Heart left ventricle (tissue), 16 donors: ENCODE measurements at regions of chr20 and their contacts with region 1.

Region 1: DNA sequence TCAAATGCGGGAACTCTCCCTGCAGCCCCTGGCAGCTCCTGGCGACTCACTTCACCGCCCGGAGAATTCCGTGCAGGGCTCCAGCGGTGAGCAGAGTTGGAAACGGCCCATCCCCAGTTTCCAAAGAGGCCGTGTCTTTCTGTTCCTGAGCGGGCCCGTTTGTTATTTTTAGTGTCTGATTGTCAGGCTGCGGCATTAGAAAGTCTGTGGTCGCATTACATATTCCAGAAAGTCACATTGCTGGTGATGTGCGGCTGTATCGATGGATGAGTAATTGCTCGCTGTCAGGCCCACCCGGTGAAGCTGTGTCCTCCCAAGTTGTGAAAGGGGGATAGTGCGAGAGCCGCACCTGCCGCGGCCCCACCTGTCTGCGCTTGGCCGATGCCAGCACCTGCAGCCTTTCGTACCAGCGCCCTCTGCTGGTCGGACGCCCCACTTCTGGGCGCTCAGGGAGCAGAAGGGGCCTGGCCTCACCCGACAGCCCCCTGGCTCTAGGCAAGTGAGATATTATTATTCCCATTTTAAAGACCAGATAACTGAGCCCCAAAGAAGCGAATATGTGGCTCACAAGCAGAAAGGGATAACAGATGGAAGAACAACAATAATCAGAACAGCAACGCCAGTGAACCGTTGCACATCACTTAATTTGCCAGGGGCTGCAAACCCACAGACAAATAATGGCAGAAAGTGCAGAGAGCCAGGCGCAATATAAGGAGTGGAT is 244.9 kb downstream of the TSHZ2 start:
- DNase-seq: peak; percentile 46 to 84 (median 64)
- ATAC-seq: peak in 3 of 4 donors; percentile 81 to 84 (median 82)
- H3K4me3 ChIP-seq: peak overlapping the region in 9 of 12 donors; percentile 5 to 32 (median 24)
- H3K27ac ChIP-seq: no peak overlapping the region
- H3K4me1 ChIP-seq: peaks cover 0 to 8% (median 5%) of the 10 kb centered on the region in 12 donors
- H3K27me3 ChIP-seq: peaks cover 0 to 10% (median 0%) of the 10 kb centered on the region in 9 donors
- CTCF ChIP-seq: peak; percentile 80 to 94 (median 88)
- POLR2A ChIP-seq: no peak

Region 2: DNA sequence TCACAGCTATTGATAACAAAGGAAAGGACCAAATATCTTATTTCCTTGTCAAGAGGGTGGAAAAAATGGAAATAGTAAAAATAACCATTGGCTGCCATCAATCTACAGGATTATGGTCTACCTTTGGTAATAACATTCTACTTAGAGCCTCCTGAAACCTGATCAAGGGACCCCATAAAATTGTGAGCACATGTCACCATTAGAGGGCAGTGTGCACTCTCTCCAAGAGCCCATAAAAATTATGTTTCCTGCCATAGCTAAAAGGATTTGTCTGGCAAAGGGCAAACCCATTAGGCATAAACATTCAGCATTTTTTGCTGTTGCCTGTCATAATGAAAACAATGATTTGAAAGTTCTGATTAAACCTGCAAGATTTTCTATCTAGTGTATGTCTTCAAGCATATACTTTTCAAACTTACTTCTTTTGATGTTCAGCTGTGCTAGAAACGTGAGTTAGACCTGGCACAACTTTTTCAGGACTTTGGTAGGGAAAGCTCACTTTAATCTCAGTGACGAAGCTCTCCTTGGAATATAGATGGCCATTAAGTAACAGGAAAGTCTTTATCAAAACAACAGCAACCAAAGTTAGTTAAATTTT is 904.8 kb before region 1 on chr20:
- intact Hi-C with region 1: loop called in 5 of 10 experiments (anchors 2 to 10 kb)
- DNase-seq: peak in 2 of 5 donors; percentile 25 to 29
- ATAC-seq: peak in 3 of 4 donors; percentile 56 to 67 (median 64)
- H3K4me3 ChIP-seq: no peak overlapping the region
- H3K27ac ChIP-seq: no peak overlapping the region
- H3K4me1 ChIP-seq: peaks cover 0 to 9% (median 0%) of the 10 kb centered on the region in 12 donors
- H3K27me3 ChIP-seq: peaks cover 0 to 7% (median 0%) of the 10 kb centered on the region in 9 donors
- CTCF ChIP-seq: peak; percentile 55 to 84 (median 71)
- POLR2A ChIP-seq: no peak

Region 3: DNA sequence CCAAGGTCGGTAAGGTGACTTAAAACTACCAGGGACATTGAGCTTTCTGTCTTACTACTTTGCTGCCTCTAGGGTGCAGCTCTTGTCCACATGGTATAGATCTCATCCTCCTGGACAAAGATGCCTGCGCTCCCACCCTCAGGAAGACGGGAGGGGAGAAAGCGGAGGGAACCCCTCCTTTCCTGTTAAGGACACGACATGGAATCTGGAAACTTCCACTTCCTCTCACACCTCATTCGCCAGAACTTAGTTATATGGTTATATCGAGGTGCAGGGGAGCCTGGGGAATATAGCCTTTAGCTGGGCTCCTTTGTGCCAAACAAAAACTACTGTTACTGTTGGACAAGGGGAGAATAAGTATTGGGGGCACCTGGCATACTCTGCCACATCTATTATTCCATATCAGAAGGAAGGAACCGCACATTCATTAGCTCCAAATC is 469.2 kb before region 1 on chr20:
- intact Hi-C with region 1: loop called in 1 of 10 experiments (anchors 10 kb)
- DNase-seq: peak in 2 of 5 donors; percentile 21 to 24
- ATAC-seq: peak; percentile 72 to 81 (median 77)
- H3K4me3 ChIP-seq: peak overlapping the region in 3 of 12 donors; percentile 3 to 24 (median 6)
- H3K27ac ChIP-seq: peak overlapping the region in 8 of 12 donors; percentile 34 to 67 (median 48)
- H3K4me1 ChIP-seq: no peaks in the 10 kb centered on the region
- H3K27me3 ChIP-seq: no peaks in the 10 kb centered on the region
- CTCF ChIP-seq: peak in 8 of 12 donors; percentile 9 to 46 (median 36)
- POLR2A ChIP-seq: no peak

Region 4: GRCh38 chr20:52972190-52972937 is 244.7 kb before region 1 on chr20 and contains the start of gene TSHZ2:
- intact Hi-C with region 1: loop called in 1 of 10 experiments (anchors 5 kb)
- DNase-seq: peak in 4 of 5 donors; percentile 14 to 64 (median 42)
- ATAC-seq: peak in 3 of 4 donors; percentile 52 to 68 (median 64)
- H3K4me3 ChIP-seq: peak within 1 kb of the TSS; percentile 14 to 75 (median 60)
- H3K27ac ChIP-seq: peak within 1 kb of the TSS in 10 of 12 donors; percentile 24 to 79 (median 64)
- H3K4me1 ChIP-seq: peaks cover 0 to 17% (median 0%) of the 10 kb centered on the region in 12 donors
- H3K27me3 ChIP-seq: peaks cover 0 to 33% (median 17%) of the 10 kb centered on the region in 9 donors
- CTCF ChIP-seq: no peak
- POLR2A ChIP-seq: peak in 1 of 2 donors; percentile 16
- total RNA-seq, gene TSHZ2: 2.3 to 12.1 (median 5.0) TPM

Region 5: GRCh38 chr20:53276143-53276542 is 59.1 kb after region 1 on chr20:
- intact Hi-C with region 1: no loop called
- DNase-seq: peak in 2 of 5 donors; percentile 31 to 40
- ATAC-seq: peak; percentile 61 to 79 (median 73)
- H3K4me3 ChIP-seq: no peak overlapping the region
- H3K27ac ChIP-seq: no peak overlapping the region
- H3K4me1 ChIP-seq: no peaks in the 10 kb centered on the region
- H3K27me3 ChIP-seq: no peaks in the 10 kb centered on the region
- CTCF ChIP-seq: no peak
- POLR2A ChIP-seq: no peak